CD8-positive, alpha-beta T cell (primary cell): ENCODE measurements at regions of chr9 and their contacts with region 1.

Region 1: GRCh38 chr9:124040935-124041816 is 29.6 kb downstream of the LHX2 start:
- DNase-seq: peak in 8 of 9 experiments; percentile 3 to 62 (median 38)
- ATAC-seq: no peak
- H3K4me3 ChIP-seq: no peak overlapping the region
- H3K4me3 Mint-ChIP-seq: peak overlapping the region; percentile 65
- H3K27ac ChIP-seq: no peak overlapping the region
- H3K27ac Mint-ChIP-seq: no peak overlapping the region
- H3K4me1 ChIP-seq: peaks cover 7% of the 10 kb centered on the region
- H3K4me1 Mint-ChIP-seq: peaks cover 14% of the 10 kb centered on the region
- H3K27me3 ChIP-seq: peaks cover 8 to 17% of the 10 kb centered on the region in 2 experiments
- H3K27me3 Mint-ChIP-seq: peaks cover 60% of the 10 kb centered on the region
- CTCF ChIP-seq: peak; percentile 90

Region 2: GRCh38 chr9:123434619-123435528 is 606.3 kb before region 1 on chr9:
- CTCF ChIA-PET with region 1: no interaction called
- POLR2A ChIA-PET with region 1: no interaction called
- intact Hi-C with region 1: no loop called
- DNase-seq: no peak
- ATAC-seq: no peak
- H3K4me3 ChIP-seq: no peak overlapping the region
- H3K4me3 Mint-ChIP-seq: no peak overlapping the region
- H3K27ac ChIP-seq: no peak overlapping the region
- H3K27ac Mint-ChIP-seq: no peak overlapping the region
- H3K4me1 ChIP-seq: no peaks in the 10 kb centered on the region
- H3K4me1 Mint-ChIP-seq: no peaks in the 10 kb centered on the region
- H3K27me3 ChIP-seq: no peaks in the 10 kb centered on the region
- H3K27me3 Mint-ChIP-seq: no peaks in the 10 kb centered on the region
- CTCF ChIP-seq: no peak

Region 3: GRCh38 chr9:123544007-123544827 is 497.0 kb before region 1 on chr9:
- CTCF ChIA-PET with region 1: interaction called, 21 read pairs
- POLR2A ChIA-PET with region 1: no interaction called
- intact Hi-C with region 1: loop called in 1 of 2 experiments (anchors 1 kb)
- DNase-seq: peak in 2 of 9 experiments; percentile 29 to 45
- ATAC-seq: no peak
- H3K4me3 ChIP-seq: no peak overlapping the region
- H3K4me3 Mint-ChIP-seq: no peak overlapping the region
- H3K27ac ChIP-seq: no peak overlapping the region
- H3K27ac Mint-ChIP-seq: no peak overlapping the region
- H3K4me1 ChIP-seq: no peaks in the 10 kb centered on the region
- H3K4me1 Mint-ChIP-seq: no peaks in the 10 kb centered on the region
- H3K27me3 ChIP-seq: no peaks in the 10 kb centered on the region
- H3K27me3 Mint-ChIP-seq: no peaks in the 10 kb centered on the region
- CTCF ChIP-seq: peak; percentile 77

Region 4: DNA sequence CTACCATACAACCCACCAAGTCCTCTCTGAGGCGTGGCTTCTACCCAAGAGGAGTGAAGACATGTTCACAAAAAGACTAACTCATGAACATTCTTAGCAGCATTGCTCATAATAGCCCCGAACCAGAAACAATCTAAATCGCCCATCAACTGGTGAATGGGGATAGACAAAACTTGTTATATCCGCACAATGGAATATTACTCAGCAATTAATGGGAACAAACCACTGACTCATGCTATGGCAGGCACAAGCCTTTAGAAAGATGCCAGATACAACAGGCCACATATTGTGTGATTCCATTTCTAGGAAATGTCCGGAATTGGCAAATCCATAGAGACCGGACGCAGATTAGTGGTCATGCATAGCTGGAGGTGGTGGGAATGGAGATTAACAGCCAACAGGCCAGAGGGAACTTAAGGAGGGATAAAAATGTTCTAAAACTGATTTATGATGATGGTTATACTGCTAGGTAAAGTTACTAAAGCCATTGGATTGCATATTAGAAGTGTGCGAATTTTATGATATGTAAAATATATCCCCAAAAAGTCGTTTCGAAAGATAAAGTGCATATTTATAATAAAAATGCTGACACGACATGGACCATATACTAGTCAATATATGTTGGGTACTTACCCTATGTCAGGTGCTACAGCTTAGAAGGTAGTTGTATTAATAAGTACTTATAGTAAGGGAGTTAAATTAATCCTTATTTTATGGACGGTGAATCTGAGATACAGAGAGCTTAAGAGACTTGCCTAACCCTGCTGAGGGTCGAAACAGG is 25.8 kb after region 1 on chr9:
- CTCF ChIA-PET with region 1: no interaction called
- POLR2A ChIA-PET with region 1: no interaction called
- intact Hi-C with region 1: no loop called
- DNase-seq: no peak
- ATAC-seq: no peak
- H3K4me3 ChIP-seq: no peak overlapping the region
- H3K4me3 Mint-ChIP-seq: no peak overlapping the region
- H3K27ac ChIP-seq: no peak overlapping the region
- H3K27ac Mint-ChIP-seq: no peak overlapping the region
- H3K4me1 ChIP-seq: no peaks in the 10 kb centered on the region
- H3K4me1 Mint-ChIP-seq: no peaks in the 10 kb centered on the region
- H3K27me3 ChIP-seq: no peaks in the 10 kb centered on the region
- H3K27me3 Mint-ChIP-seq: peaks cover 17% of the 10 kb centered on the region
- CTCF ChIP-seq: no peak